K562 (cell line): ENCODE measurements at regions of chr16 and their contacts with region 1.

Region 1: DNA sequence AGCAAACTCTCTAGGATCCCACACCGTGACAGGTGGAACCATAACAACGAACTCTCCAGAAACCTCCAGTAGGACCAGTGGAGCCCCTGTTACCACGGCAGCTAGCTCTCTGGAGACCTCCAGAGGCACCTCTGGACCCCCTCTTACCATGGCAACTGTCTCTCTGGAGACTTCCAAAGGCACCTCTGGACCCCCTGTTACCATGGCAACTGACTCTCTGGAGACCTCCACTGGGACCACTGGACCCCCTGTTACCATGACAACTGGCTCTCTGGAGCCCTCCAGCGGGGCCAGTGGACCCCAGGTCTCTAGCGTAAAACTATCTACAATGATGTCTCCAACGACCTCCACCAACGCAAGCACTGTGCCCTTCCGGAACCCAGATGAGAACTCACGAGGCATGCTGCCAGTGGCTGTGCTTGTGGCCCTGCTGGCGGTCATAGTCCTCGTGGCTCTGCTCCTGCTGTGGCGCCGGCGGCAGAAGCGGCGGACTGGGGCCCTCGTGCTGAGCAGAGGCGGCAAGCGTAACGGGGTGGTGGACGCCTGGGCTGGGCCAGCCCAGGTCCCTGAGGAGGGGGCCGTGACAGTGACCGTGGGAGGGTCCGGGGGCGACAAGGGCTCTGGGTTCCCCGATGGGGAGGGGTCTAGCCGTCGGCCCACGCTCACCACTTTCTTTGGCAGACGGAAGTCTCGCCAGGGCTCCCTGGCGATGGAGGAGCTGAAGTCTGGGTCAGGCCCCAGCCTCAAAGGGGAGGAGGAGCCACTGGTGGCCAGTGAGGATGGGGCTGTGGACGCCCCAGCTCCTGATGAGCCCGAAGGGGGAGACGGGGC is 1.3 kb downstream of the SPN start:
- DNase-seq: peak; percentile 74 to 84 (median 80)
- ATAC-seq: peak; percentile 33
- H3K4me3 ChIP-seq: peak overlapping the region; percentile 60
- H3K27ac ChIP-seq: peak overlapping the region; percentile 93
- H3K4me1 ChIP-seq: peaks cover 31 to 52% of the 10 kb centered on the region in 2 experiments
- H3K27me3 ChIP-seq: no peaks in the 10 kb centered on the region
- CTCF ChIP-seq: peak in 2 of 3 experiments; percentile 31 to 40; a peak in 3 of 6 replicates
- EP300 ChIP-seq: no peak
- POLR2A ChIP-seq: no peak
- RAD21 ChIP-seq: no peak

Region 2: GRCh38 chr16:29678691-29679267 is 14.5 kb after region 1 on chr16 and contains the start of gene QPRT:
- CTCF ChIA-PET with region 1: no interaction called
- POLR2A ChIA-PET with region 1: interaction called, 12 read pairs
- in situ Hi-C with region 1: no loop called
- intact Hi-C with region 1: loop called (anchors 1 kb)
- DNase-seq: peak; percentile 86 to 93 (median 90)
- ATAC-seq: peak; percentile 91
- H3K4me3 ChIP-seq: peak within 1 kb of the TSS; percentile 62
- H3K27ac ChIP-seq: peak within 1 kb of the TSS; percentile 82
- H3K4me1 ChIP-seq: peaks cover 23 to 57% of the 10 kb centered on the region in 2 experiments
- H3K27me3 ChIP-seq: no peaks in the 10 kb centered on the region
- CTCF ChIP-seq: no peak
- EP300 ChIP-seq: no peak
- POLR2A ChIP-seq: peak; percentile 69
- RAD21 ChIP-seq: no peak
- polyA plus RNA-seq, gene QPRT: 7.7 to 10.8 TPM

Region 3: GRCh38 chr16:29765167-29766032 is 101.1 kb after region 1 on chr16:
- CTCF ChIA-PET with region 1: no interaction called
- POLR2A ChIA-PET with region 1: no interaction called
- in situ Hi-C with region 1: no loop called
- intact Hi-C with region 1: no loop called
- DNase-seq: peak in 1 of 4 experiments; percentile 23
- ATAC-seq: peak; percentile 72
- H3K4me3 ChIP-seq: no peak overlapping the region
- H3K27ac ChIP-seq: no peak overlapping the region
- H3K4me1 ChIP-seq: peaks cover 6 to 11% of the 10 kb centered on the region in 2 experiments
- H3K27me3 ChIP-seq: no peaks in the 10 kb centered on the region
- CTCF ChIP-seq: no peak
- EP300 ChIP-seq: peak; percentile 12; the same call in 1 of the 2 replicates
- POLR2A ChIP-seq: no peak
- RAD21 ChIP-seq: no peak

Region 4: DNA sequence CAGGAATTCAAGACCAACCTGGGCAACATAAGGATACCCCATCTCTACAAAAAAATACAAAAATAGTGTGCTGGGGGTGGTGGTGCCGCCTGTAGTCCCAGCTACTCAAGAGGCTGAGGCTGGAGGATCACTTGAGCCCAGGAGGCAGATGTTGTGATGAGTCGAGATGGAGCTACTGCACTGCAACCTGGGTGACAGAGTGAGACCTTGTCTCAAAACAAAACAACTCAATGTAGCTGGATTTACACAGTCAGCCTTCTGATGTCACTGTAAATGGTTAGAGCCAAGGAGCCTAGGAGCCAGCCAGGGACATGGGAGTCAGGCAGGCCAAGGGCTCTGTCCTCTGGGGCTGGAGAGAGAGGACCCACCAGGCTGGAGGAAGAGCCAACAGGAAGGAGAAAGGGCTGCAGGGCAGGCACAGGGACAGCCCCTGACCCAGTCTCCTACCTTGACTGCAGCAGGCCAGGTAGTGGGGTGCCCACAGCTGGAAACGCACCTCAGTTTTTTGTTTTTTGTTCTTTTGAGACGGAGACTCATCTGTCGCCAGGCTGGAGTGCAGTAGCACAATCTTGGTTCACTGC is 190.3 kb after region 1 on chr16:
- CTCF ChIA-PET with region 1: no interaction called
- POLR2A ChIA-PET with region 1: no interaction called
- in situ Hi-C with region 1: no loop called
- intact Hi-C with region 1: no loop called
- DNase-seq: no peak
- ATAC-seq: peak; percentile 25; the same call in 1 of the 3 replicates
- H3K4me3 ChIP-seq: no peak overlapping the region
- H3K27ac ChIP-seq: no peak overlapping the region
- H3K4me1 ChIP-seq: peaks cover 4% of the 10 kb centered on the region in 2 experiments; a peak in 2 of 5 replicates
- H3K27me3 ChIP-seq: no peaks in the 10 kb centered on the region
- CTCF ChIP-seq: no peak
- EP300 ChIP-seq: no peak
- POLR2A ChIP-seq: no peak
- RAD21 ChIP-seq: no peak